ENCODE measurements at regions of chr10 and their contacts with region 1.

Region 1: GRCh38 chr10:100046021-100046486 is 35.6 kb downstream of the CPN1 start:
- DNase-seq: peak; percentile 83 to 91
- H3K4me3 ChIP-seq: no peak overlapping the region
- H3K27ac ChIP-seq: no peak overlapping the region
- H3K4me1 ChIP-seq: no peaks in the 10 kb centered on the region
- H3K27me3 ChIP-seq: no peaks in the 10 kb centered on the region
- CTCF ChIP-seq: peak; percentile 83 to 97 (median 90)
- POLR2A ChIP-seq: no peak

Region 2: GRCh38 chr10:99845837-99846382 is 200.1 kb before region 1 on chr10:
- intact Hi-C with region 1: loop called (anchors 5 kb)
- DNase-seq: peak; percentile 75
- H3K4me3 ChIP-seq: no peak overlapping the region
- H3K27ac ChIP-seq: no peak overlapping the region
- H3K4me1 ChIP-seq: peaks cover 0 to 6% of the 10 kb centered on the region in 2 donors
- H3K27me3 ChIP-seq: no peaks in the 10 kb centered on the region
- CTCF ChIP-seq: peak; percentile 72 to 97 (median 92)
- POLR2A ChIP-seq: no peak

Region 3: DNA sequence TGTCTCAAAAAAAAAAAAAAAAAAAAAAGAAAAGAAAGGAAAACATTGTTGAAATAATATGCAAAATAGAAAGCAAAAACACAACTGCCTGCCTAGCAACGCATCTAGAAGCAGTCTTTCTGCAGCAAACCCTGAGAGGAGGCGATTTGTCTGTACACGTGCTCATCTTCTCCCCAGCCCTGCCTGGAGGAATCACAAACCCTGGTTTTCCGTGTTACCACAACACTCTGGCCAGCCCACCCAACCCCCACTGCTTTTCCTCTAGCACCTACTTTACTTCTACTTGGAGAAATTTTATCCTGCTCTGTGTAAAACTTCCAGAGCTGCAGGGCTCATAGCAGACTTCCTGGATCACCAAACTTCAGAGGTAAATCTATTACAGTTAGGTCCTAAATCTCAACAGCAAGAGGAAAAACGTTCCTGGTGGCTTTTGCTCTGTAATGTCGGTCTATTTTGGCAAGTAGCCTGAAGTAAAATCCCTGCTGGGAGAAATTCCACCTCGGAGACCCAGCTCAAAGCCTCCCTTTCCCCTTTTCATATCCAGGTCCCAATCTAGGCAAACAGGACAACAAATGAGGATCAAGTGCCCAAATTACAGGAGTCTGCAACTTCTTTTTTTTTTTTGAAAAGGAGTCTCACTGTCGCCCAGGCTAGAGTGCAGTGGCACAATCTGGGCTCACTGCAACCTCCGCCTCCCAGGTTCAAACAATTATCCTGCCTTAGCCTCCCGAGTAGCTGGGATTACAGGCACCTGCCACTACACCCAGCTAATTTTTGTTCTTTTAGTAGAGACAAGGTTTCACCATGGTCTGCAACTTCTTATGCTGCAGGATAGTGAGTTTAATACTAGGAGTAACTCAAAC is 127.9 kb before region 1 on chr10:
- intact Hi-C with region 1: no loop called
- DNase-seq: peak; percentile 75 to 83
- H3K4me3 ChIP-seq: peak overlapping the region in 1 of 3 donors; percentile 2
- H3K27ac ChIP-seq: peak overlapping the region; percentile 49 to 82 (median 80)
- H3K4me1 ChIP-seq: peaks cover 37 to 38% of the 10 kb centered on the region in 2 donors
- H3K27me3 ChIP-seq: no peaks in the 10 kb centered on the region
- CTCF ChIP-seq: no peak
- POLR2A ChIP-seq: peak in 1 of 2 donors; percentile 24

Region 4: DNA sequence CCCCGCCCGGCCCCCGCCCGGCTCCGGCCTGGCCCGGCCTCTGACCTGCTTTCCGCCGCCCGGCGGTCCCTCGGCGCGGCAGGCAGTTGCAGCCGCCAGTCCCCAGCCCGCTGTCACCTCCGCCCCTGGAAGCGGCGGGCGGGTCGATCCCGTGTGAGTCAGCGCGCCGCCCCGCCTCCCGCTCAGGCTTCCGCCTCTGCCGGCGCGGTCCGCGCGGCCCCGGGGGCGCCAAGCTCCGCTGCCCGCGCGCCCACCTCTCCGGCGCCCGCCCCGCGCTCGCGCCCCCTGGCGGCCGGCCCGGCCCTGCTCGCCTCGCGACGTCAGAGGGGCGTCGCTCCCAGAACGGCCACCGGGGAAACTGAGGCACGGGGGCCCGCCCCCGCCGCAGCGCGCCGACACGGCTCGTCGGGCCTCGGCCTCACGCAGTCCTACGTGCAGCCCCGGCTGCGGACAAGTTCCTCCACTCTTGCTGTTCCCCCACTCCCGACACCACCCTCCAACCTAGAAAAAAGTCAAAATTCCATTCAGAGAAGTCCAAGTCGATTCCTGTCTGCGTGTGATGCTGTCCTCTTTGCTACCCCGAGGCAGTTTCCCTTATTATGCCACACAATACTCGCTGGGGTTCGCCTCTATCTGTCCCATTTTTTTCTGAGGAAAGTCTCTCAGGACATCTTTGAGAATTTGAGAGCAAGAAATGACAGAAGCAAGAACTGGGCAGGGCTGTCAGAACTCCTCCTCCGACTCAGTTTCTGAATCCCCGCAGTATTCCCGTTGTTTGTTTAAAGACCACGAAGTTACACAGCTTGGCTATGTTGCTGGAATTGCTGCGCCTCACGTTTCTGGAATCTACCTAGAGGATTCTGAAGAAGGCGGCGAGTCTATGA is 36.0 kb before region 1 on chr10 and contains the start of gene DNMBP:
- intact Hi-C with region 1: loop called (anchors 2 kb)
- DNase-seq: peak; percentile 84 to 87
- H3K4me3 ChIP-seq: peak within 1 kb of the TSS in 2 of 3 donors; percentile 56 to 78
- H3K27ac ChIP-seq: peak within 1 kb of the TSS; percentile 57 to 86 (median 83)
- H3K4me1 ChIP-seq: peaks cover 16 to 19% of the 10 kb centered on the region in 2 donors
- H3K27me3 ChIP-seq: no peaks in the 10 kb centered on the region
- CTCF ChIP-seq: peak in 5 of 6 experiments; percentile 18 to 87 (median 56)
- POLR2A ChIP-seq: peak in 1 of 2 donors; percentile 71
- total RNA-seq, gene DNMBP: 11.7 to 17.4 (median 13.4) TPM

Region 5: GRCh38 chr10:100025576-100025975 is 20.5 kb before region 1 on chr10:
- intact Hi-C with region 1: no loop called
- DNase-seq: peak; percentile 28 to 66
- H3K4me3 ChIP-seq: no peak overlapping the region
- H3K27ac ChIP-seq: no peak overlapping the region
- H3K4me1 ChIP-seq: no peaks in the 10 kb centered on the region
- H3K27me3 ChIP-seq: no peaks in the 10 kb centered on the region
- CTCF ChIP-seq: no peak
- POLR2A ChIP-seq: no peak

Region 6: GRCh38 chr10:100114976-100115770 is 69.1 kb after region 1 on chr10:
- intact Hi-C with region 1: no loop called
- DNase-seq: no peak
- H3K4me3 ChIP-seq: no peak overlapping the region
- H3K27ac ChIP-seq: no peak overlapping the region
- H3K4me1 ChIP-seq: peaks cover 0 to 4% of the 10 kb centered on the region in 2 donors
- H3K27me3 ChIP-seq: no peaks in the 10 kb centered on the region
- CTCF ChIP-seq: no peak
- POLR2A ChIP-seq: no peak

Region 7: GRCh38 chr10:100130831-100131230 is 84.8 kb after region 1 on chr10:
- intact Hi-C with region 1: no loop called
- DNase-seq: no peak
- H3K4me3 ChIP-seq: no peak overlapping the region
- H3K27ac ChIP-seq: no peak overlapping the region
- H3K4me1 ChIP-seq: no peaks in the 10 kb centered on the region
- H3K27me3 ChIP-seq: no peaks in the 10 kb centered on the region
- CTCF ChIP-seq: no peak
- POLR2A ChIP-seq: no peak

Measured in thyroid gland (tissue), 4 donors.